T-cell (primary cell): ENCODE measurements at regions of chr3 and their contacts with region 1.

Region 1: DNA sequence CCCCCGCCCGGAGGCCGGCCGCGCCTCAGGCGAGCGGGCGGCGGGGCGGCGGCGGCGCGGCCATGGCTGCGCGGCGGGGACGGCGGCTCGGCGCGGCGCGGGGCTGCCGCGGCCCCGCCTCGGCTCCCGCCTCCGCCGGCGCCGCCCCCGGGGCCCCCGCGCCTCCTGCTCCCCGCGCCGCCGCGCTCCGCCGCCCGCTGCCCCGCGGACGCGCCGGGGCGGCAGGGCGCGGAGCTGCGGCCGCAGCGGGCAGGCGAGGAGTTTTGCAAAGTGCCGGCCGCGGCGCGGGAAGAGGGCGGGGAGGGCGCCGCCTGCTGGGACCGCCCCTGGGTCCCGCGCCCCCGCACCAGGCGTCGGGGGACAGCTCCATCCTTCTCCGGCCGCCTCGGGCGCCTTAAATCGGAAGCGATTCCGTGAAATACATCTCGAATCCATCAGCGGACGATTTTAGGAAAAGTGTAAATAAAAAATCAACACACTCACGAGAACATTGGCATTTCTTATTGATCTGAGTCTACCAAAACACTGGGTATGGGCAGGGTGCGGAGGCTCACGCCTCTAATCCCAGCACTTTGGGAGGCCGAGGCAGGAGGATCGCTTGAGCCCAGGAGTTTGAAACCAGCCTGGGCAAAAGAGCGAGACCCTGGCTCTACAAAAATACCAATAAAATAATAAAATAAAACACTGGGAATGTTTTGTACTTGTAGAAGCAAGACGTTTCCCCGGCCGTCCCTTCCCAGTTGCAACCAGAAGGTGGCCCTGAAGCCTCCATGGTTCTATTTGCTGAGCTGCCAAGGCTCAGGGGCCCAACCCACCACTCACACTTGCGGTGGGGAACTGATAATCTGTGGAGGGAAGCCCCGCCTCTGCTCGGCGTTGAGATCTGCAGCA is 136.9 kb downstream of the NUP210 start:
- DNase-seq: peak in 1 of 35 experiments; percentile 35
- ATAC-seq: peak; percentile 59 to 65 (median 63)
- H3K4me3 ChIP-seq: peak overlapping the region in 1 of 2 donors; percentile 56
- H3K4me3 Mint-ChIP-seq: peak overlapping the region; percentile 62 to 74 (median 71)
- H3K27ac ChIP-seq: no peak overlapping the region
- H3K27ac Mint-ChIP-seq: no peak overlapping the region
- H3K4me1 ChIP-seq: peaks cover 0 to 20% of the 10 kb centered on the region in 2 experiments
- H3K4me1 Mint-ChIP-seq: peaks cover 7 to 14% (median 8%) of the 10 kb centered on the region in 3 donors
- H3K27me3 ChIP-seq: peaks cover 0 to 67% of the 10 kb centered on the region in 2 experiments
- H3K27me3 Mint-ChIP-seq: peaks cover 51 to 66% of the 10 kb centered on the region in 2 donors

Region 2: GRCh38 chr3:13112521-13113301 is 170.5 kb before region 1 on chr3:
- CTCF ChIA-PET with region 1: no interaction called
- POLR2A ChIA-PET with region 1: no interaction called
- DNase-seq: no peak
- ATAC-seq: no peak
- H3K4me3 ChIP-seq: no peak overlapping the region
- H3K4me3 Mint-ChIP-seq: no peak overlapping the region
- H3K27ac ChIP-seq: no peak overlapping the region
- H3K27ac Mint-ChIP-seq: no peak overlapping the region
- H3K4me1 ChIP-seq: peaks cover 3 to 18% of the 10 kb centered on the region in 2 experiments
- H3K4me1 Mint-ChIP-seq: peaks cover 13 to 17% (median 13%) of the 10 kb centered on the region in 3 donors
- H3K27me3 ChIP-seq: peaks cover 0 to 44% of the 10 kb centered on the region in 2 experiments
- H3K27me3 Mint-ChIP-seq: peaks cover 4 to 7% of the 10 kb centered on the region in 2 donors

Region 3: DNA sequence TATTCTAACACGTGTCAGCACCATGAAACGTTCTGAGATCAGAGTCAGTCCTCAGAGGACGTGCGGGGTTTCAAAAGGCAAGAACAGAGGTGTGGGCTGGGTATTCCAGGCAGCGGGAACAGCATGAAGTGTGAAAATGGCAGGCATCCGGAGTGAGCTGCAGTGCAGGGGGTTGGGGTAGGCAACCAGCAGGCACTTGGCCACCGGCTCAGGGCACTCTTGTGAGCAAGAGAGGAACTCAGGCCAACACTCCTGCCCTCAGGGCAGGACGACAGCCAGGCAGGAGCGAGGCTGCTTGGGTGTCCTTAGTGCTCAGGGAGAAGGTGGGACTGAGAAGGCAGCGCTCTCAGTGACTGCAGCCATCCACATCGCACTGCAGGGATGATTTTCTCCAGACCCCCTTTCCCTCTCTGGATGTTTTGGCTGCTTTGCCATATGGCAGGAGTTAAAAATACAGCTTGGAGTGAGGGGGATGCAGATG is 14.2 kb before region 1 on chr3:
- CTCF ChIA-PET with region 1: no interaction called
- POLR2A ChIA-PET with region 1: no interaction called
- DNase-seq: no peak
- ATAC-seq: no peak
- H3K4me3 ChIP-seq: no peak overlapping the region
- H3K4me3 Mint-ChIP-seq: no peak overlapping the region
- H3K27ac ChIP-seq: no peak overlapping the region
- H3K27ac Mint-ChIP-seq: no peak overlapping the region
- H3K4me1 ChIP-seq: no peaks in the 10 kb centered on the region
- H3K4me1 Mint-ChIP-seq: peaks cover 0 to 6% (median 0%) of the 10 kb centered on the region in 3 donors
- H3K27me3 ChIP-seq: peaks cover 0 to 50% of the 10 kb centered on the region in 2 experiments
- H3K27me3 Mint-ChIP-seq: peaks cover 12 to 17% of the 10 kb centered on the region in 2 donors

Region 4: GRCh38 chr3:13357074-13357473 is 73.8 kb after region 1 on chr3:
- CTCF ChIA-PET with region 1: no interaction called
- POLR2A ChIA-PET with region 1: interaction called in 1 of 2 experiments, 10 read pairs
- DNase-seq: no peak
- ATAC-seq: no peak
- H3K4me3 ChIP-seq: no peak overlapping the region
- H3K4me3 Mint-ChIP-seq: no peak overlapping the region
- H3K27ac ChIP-seq: no peak overlapping the region
- H3K27ac Mint-ChIP-seq: peak overlapping the region in 1 of 2 donors; percentile 7
- H3K4me1 ChIP-seq: no peaks in the 10 kb centered on the region
- H3K4me1 Mint-ChIP-seq: peaks cover 13 to 23% (median 14%) of the 10 kb centered on the region in 3 donors
- H3K27me3 ChIP-seq: no peaks in the 10 kb centered on the region
- H3K27me3 Mint-ChIP-seq: no peaks in the 10 kb centered on the region